Mammary epithelial cell (primary cell): ENCODE measurements at regions of chr4 and their contacts with region 1.

Region 1: GRCh38 chr4:108650212-108651013 is at the start of gene OSTC:
- DNase-seq: peak; percentile 92
- H3K4me3 ChIP-seq: peak within 1 kb of the TSS; percentile 85 to 100 (median 99)
- H3K27ac ChIP-seq: peak within 1 kb of the TSS; percentile 96
- H3K4me1 ChIP-seq: no peaks in the 10 kb centered on the region
- H3K27me3 ChIP-seq: no peaks in the 10 kb centered on the region
- CTCF ChIP-seq: no peak
- total RNA-seq, gene OSTC: 99.8 to 139 TPM

Region 2: DNA sequence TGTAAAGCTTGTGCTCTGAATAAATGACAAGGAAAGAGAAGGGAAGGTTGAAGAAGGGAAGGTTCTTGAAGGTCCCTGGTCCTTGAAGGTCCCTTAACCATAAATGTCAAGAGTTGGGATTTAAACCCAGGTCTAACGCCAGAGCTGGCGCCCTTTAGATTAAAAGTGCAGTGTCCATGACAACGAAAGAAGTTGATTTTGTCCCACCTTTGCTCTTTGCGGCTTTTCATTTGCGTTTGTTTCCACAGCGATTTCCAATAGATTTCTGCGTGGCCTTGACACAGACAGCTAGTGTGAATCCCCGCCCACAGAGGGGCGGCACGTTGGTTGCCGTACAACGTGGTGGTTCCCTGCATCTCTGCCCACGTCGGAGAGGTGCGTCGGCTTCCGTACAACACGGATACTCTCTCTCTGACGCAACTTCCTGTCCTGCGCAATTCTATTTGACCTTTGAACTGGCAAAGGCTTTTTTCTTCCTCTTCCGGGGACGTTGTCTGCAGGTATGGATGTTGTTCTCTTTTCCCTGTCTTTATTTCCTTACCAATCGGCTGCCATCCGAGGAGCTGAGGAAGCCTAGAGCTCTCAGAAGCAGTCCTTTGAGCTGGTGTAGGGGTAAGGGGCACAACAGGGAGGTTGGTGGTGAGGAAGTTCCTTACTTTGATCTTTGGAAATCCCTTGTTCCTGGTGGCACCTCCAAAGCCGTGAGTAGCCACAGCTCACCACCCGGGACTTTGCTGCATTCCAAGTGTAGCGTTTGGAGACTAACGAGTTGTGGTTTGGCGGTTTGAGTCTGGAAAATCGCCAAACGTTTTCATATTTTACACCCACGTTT is 30.1 kb before region 1 on chr4 and contains the start of gene RPL34:
- CTCF ChIA-PET with region 1: no interaction called
- dilution Hi-C with region 1: no loop called
- in situ Hi-C with region 1: no loop called
- intact Hi-C with region 1: loop called (anchors 2 kb)
- DNase-seq: peak; percentile 96
- H3K4me3 ChIP-seq: peak within 1 kb of the TSS; percentile 71 to 90 (median 85)
- H3K27ac ChIP-seq: peak within 1 kb of the TSS; percentile 89
- H3K4me1 ChIP-seq: peaks cover 28% of the 10 kb centered on the region
- H3K27me3 ChIP-seq: no peaks in the 10 kb centered on the region
- CTCF ChIP-seq: no peak
- total RNA-seq, gene RPL34: 400 to 945 TPM

Region 3: DNA sequence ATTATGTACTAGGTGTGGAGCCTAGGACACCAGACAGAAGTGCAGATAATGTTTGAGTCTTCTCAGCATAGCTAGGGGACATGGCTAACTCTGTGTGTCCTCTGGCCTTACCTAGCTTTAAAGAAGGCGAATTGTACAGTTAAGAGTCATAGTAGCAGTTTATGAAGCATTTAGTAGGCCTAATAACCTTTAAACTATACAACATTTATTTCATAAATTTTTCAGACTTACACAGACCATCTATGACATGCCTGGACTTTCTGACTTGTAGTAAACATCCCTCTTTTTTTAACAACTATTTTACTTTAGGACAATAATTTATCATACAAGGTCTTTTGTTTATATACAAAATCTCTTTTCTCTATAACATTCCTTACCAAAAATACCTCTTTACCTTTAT is 75.0 kb after region 1 on chr4:
- CTCF ChIA-PET with region 1: no interaction called
- dilution Hi-C with region 1: no loop called
- in situ Hi-C with region 1: no loop called
- intact Hi-C with region 1: no loop called
- DNase-seq: peak; percentile 8
- H3K4me3 ChIP-seq: no peak overlapping the region
- H3K27ac ChIP-seq: no peak overlapping the region
- H3K4me1 ChIP-seq: no peaks in the 10 kb centered on the region
- H3K27me3 ChIP-seq: peaks cover 4% of the 10 kb centered on the region
- CTCF ChIP-seq: no peak